Activated CD4-positive, alpha-beta memory T cell treated with anti-CD3 and anti-CD28 coated beads for 36 hours (primary cell): ENCODE measurements at regions of chr19 and their contacts with region 1.

Region 1: DNA sequence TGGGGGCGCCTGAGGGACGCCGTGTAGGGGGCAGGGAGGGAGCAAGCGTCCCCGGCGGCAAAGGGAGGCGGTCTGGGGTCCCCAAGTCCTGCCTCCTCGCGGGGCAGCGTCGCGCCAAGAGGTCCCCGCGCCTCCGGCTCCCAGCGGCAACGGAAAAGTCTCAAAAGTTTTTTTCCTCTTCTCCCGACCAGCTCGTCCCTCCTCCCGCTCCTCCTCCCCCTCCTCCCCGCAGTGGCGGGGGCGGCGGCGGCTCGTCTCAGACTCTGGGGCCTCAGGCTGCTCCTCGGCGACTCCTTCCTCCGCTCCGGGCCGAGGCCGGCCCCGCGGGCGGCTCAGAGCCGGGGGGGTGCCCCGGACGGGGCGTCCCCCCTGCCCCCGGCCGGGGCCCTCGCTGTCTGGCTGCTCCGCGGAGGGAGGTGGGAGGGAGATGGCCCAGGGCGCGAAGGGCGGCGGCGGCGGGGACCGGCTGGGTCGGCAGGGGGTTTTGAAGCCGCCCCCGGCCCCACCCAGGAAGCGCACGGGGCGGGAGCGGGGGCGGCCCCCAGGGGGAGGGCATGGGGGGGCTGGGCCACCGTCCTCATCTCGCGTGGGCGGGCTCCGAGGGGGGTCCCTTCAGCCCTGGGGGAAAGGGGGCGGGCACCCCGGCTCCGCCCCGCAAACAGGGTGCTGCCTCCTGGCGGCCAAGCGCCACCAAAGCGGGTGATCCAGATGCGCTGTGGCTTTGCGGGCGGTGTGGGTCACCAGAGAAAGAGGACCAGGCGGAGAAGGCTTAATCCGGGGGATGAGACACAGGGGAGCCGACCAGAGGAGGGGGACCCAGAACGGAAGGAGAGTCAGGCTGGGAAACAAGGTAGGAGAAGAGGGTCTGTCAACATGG is at the start of gene TGFB1:
- DNase-seq: peak; percentile 94
- H3K4me3 Mint-ChIP-seq: peak within 1 kb of the TSS; percentile 95
- H3K27ac Mint-ChIP-seq: peak within 1 kb of the TSS; percentile 94
- H3K4me1 Mint-ChIP-seq: peaks cover 58% of the 10 kb centered on the region
- H3K27me3 Mint-ChIP-seq: no peaks in the 10 kb centered on the region
- total RNA-seq, gene TGFB1: 108 to 110 TPM

Region 2: DNA sequence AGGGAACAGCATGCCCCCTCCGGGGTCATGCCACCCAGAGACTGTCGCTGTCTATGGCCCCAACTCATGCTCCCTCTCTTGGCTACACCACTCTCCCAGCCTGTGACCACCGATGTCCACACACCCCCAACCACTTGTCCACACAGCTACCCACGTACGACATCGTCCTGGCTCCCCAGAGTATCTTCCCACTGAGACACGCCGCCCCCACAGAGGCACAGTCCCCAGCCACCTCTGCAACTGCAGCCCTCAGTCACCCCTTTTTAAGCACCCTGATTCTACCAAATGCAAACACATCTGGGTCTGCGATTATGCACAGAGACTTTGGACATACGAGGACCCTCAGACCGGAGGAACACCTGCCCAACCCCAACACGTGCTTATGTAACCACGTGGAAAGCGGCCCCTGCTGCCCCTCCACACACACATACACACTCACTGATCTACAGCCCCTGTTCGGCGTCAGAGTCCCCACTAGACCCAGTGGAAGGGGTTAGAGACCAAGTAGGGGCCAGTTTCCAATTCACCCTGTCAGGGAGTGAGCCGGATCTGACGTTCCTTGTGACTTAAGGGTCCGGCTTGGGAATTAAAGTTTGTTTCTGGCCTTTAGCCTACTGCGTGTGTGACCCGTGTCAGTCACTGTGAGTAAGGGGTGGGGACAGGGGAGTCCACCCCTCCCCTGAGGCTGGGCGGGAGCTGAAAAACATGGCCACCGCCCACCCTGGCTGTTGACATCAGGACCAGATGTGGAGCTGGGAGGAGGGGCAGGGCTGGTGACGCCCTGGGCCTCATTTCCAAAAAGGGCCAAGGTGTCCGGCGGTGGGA is 146.6 kb before region 1 on chr19:
- CTCF ChIA-PET with region 1: interaction called, 10 read pairs
- POLR2A ChIA-PET with region 1: no interaction called
- intact Hi-C with region 1: loop called (anchors 5 kb)
- DNase-seq: no peak
- H3K4me3 Mint-ChIP-seq: no peak overlapping the region
- H3K27ac Mint-ChIP-seq: no peak overlapping the region
- H3K4me1 Mint-ChIP-seq: peaks cover 11% of the 10 kb centered on the region
- H3K27me3 Mint-ChIP-seq: peaks cover 2% of the 10 kb centered on the region

Region 3: GRCh38 chr19:41321600-41322270 is 32.0 kb before region 1 on chr19:
- CTCF ChIA-PET with region 1: interaction called, 24 read pairs
- POLR2A ChIA-PET with region 1: interaction called, 43 read pairs
- intact Hi-C with region 1: no loop called
- DNase-seq: no peak
- H3K4me3 Mint-ChIP-seq: no peak overlapping the region
- H3K27ac Mint-ChIP-seq: peak overlapping the region; percentile 47
- H3K4me1 Mint-ChIP-seq: peaks cover 23% of the 10 kb centered on the region
- H3K27me3 Mint-ChIP-seq: no peaks in the 10 kb centered on the region

Region 4: DNA sequence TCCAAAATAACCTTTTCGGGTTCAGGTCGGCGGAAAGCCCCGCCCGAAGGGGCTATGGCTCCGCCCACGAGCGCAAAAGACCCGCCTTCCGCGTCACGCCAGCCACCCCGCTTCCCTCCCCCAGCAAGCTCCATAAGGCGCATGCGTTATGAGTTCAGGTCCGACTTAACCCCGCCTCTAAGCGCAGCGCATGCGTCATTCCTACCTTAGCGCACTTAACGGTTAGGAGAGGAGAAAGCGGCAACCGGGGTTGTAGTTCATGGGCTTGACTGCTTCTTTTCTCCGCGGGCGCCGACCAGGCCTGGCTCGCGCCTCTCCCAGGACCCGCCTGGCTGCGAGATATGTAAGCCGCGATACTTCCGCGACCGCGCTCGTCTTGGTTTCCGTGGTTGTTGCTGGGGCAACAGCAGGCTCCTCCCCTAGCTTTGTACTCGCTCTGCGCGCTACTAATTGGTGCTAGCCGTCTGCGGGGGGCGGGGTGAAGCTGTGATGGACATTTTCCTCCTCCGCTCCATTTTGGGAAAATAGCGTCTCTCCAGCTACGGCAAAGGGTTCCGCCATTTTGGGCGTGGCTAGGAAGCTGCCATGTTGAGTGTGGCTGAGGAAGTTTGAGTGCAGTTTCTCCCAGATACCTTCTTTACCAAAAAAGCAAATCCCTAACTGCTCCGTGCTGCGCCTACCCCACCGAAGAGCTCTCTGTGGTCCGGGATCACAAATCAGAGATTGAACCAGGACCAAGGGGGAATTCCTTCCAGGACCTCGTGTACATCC is 10.2 kb after region 1 on chr19 and contains the start of gene B9D2:
- CTCF ChIA-PET with region 1: interaction called, 69 read pairs
- POLR2A ChIA-PET with region 1: interaction called, 21 read pairs
- intact Hi-C with region 1: loop called (anchors 1 kb)
- DNase-seq: peak; percentile 99
- H3K4me3 Mint-ChIP-seq: peak within 1 kb of the TSS; percentile 91
- H3K27ac Mint-ChIP-seq: peak within 1 kb of the TSS; percentile 92
- H3K4me1 Mint-ChIP-seq: peaks cover 15% of the 10 kb centered on the region
- H3K27me3 Mint-ChIP-seq: no peaks in the 10 kb centered on the region
- total RNA-seq, gene B9D2: 4.7 to 5.1 TPM

Region 5: DNA sequence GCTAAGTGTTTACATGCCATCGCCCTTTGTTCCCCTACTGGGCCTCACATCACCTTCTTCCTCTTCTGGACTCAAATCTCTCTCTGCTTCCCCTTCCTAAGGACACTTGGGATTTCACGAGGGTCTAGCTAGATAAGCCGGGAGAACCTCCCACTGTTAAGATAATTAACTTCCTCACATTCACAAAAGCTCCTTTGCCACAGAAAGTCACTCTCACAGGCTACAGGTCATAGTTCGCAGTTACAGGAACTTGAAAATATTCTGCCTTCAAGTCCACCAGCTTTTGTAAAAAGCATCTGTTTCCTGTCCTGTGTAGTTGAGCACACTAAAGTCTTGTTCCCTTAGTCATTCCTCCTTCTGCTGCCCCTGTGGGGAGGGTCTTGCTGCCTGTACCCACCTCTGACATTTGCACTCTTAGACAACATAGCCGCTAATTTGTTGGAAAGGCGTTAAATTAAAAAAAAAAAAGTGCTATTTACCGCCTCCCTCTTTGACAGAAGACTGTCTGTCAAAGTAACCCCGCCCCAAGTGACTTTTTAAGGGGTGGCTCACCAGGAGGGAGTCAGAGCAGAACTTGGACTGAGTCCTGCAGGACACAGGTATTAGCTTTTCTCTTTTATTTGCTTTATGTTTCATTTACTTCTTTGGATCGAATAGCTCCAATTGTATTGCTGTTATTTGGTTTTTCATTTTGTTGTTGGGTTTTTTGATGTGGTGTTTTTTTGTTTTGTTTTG is 195.4 kb after region 1 on chr19:
- CTCF ChIA-PET with region 1: no interaction called
- POLR2A ChIA-PET with region 1: interaction called, 11 read pairs
- intact Hi-C with region 1: loop called (anchors 5 kb)
- DNase-seq: peak; percentile 88
- H3K4me3 Mint-ChIP-seq: peak overlapping the region; percentile 98
- H3K27ac Mint-ChIP-seq: peak overlapping the region; percentile 96
- H3K4me1 Mint-ChIP-seq: peaks cover 61% of the 10 kb centered on the region
- H3K27me3 Mint-ChIP-seq: no peaks in the 10 kb centered on the region